Activated T-helper 1 cell treated with anti-CD3 and anti-CD28 coated beads, Interleukin-12 subunit alpha, Interleukin-12 subunit beta, Interleukin-2, Interleukin-4 antibody, amounts not matched to agents 30 ng/mL and 10 ng/mL and 1 ng/mL, durations not matched to agents 14 hours and 24 hours and 36 hours (primary cell): ENCODE measurements at regions of chr3 and their contacts with region 1.

Region 1: GRCh38 chr3:11271986-11272904 is at the start of gene ATG7:
- DNase-seq: peak; percentile 96
- H3K4me3 Mint-ChIP-seq: peak within 1 kb of the TSS; percentile 90
- H3K27ac Mint-ChIP-seq: peak within 1 kb of the TSS; percentile 90
- H3K4me1 Mint-ChIP-seq: peaks cover 45% of the 10 kb centered on the region
- H3K27me3 Mint-ChIP-seq: peaks cover 3% of the 10 kb centered on the region
- total RNA-seq, gene ATG7: 38.6 and 44.0 TPM in 2 replicates

Region 2: DNA sequence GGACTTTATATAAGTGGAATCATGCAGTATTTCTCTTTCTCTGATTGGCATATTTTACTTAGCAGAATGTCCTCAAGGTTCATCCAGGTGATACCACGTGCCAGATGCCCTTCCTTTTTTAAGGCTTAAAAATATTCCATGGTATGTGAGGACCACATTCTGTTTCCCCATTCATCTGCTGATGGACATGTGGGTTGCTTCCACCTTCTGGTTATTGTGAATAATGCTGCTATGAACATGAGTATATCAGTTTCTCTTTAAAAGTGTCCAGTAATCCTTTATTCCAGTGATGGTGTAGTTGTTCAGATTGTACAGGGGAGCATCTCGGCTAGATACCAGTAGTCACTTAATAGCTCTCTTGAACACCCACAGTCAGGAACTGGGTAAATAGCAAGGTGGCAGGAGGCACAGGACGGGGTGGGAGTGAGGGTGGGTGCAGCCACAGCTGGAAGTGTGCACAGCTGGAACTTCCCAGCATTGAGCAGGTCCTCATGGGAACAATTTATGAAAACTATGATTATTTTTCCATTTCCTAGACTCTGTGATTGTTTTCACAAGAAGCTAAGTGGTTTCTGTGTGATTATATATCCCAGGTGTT is 50.3 kb before region 1 on chr3:
- intact Hi-C with region 1: no loop called
- DNase-seq: no peak
- H3K4me3 Mint-ChIP-seq: no peak overlapping the region
- H3K27ac Mint-ChIP-seq: no peak overlapping the region
- H3K4me1 Mint-ChIP-seq: peaks cover 5% of the 10 kb centered on the region
- H3K27me3 Mint-ChIP-seq: peaks cover 4% of the 10 kb centered on the region

Region 3: GRCh38 chr3:11236595-11237461 is 35.4 kb before region 1 on chr3:
- intact Hi-C with region 1: loop called (anchors 1 kb)
- DNase-seq: peak; percentile 62
- H3K4me3 Mint-ChIP-seq: no peak overlapping the region
- H3K27ac Mint-ChIP-seq: no peak overlapping the region
- H3K4me1 Mint-ChIP-seq: peaks cover 27% of the 10 kb centered on the region
- H3K27me3 Mint-ChIP-seq: peaks cover 22% of the 10 kb centered on the region

Region 4: DNA sequence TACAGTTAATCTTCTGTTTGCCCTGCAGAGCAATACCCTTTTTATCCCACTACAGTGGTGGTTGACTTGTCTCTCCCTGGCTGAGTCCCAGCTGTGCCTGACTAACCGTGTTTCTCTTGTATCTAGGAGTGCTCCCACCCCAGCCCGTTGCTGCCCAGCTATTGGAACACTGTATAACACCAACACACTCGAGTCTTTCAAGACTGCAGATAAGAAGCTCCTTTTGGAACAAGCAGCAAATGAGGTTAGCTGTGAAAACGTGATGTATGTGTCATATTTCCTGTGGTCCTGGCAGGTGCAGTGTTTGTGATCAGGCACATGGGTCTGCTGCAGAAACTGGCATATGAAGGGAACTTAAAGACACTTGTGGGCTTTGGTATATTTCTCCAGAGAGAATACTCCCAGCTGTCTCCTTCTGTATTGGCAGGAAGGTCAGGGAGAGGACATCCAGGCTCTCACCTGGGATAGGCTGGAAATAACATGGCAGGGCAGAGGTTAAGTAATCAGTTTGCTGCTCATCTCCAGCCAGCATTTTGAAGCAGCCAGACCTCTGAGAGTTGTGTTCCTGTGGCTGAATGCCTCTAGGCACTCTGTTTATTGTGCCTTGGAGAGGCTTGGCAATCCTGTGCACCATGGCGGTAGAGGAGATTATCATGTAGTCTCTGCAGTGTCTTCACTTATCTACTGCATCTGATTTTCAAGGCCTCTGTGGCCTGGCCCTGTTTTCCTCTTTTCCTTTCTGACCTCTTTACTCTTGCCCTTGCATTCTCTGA is 34.8 kb after region 1 on chr3:
- intact Hi-C with region 1: loop called (anchors 2 kb)
- DNase-seq: peak; percentile 8
- H3K4me3 Mint-ChIP-seq: peak overlapping the region; percentile 32
- H3K27ac Mint-ChIP-seq: peak overlapping the region; percentile 46
- H3K4me1 Mint-ChIP-seq: peaks cover 32% of the 10 kb centered on the region
- H3K27me3 Mint-ChIP-seq: no peaks in the 10 kb centered on the region